B cell (primary cell): ENCODE measurements at regions of chr5 and their contacts with region 1.

Region 1: GRCh38 chr5:34522599-34523386 is 133.3 kb upstream of the RAI14 start:
- DNase-seq: peak; percentile 71
- ATAC-seq: peak; percentile 63
- H3K4me3 ChIP-seq: no peak overlapping the region
- H3K4me3 Mint-ChIP-seq: no peak overlapping the region
- H3K27ac ChIP-seq: no peak overlapping the region
- H3K27ac Mint-ChIP-seq: no peak overlapping the region
- H3K4me1 ChIP-seq: peaks cover 0 to 3% of the 10 kb centered on the region in 2 donors
- H3K4me1 Mint-ChIP-seq: no peaks in the 10 kb centered on the region
- H3K27me3 ChIP-seq: no peaks in the 10 kb centered on the region
- H3K27me3 Mint-ChIP-seq: peaks cover 5% of the 10 kb centered on the region
- CTCF ChIP-seq: peak; percentile 83

Region 2: GRCh38 chr5:34022121-34022705 is 500.6 kb before region 1 on chr5:
- CTCF ChIA-PET with region 1: no interaction called
- POLR2A ChIA-PET with region 1: no interaction called
- intact Hi-C with region 1: no loop called
- DNase-seq: no peak
- ATAC-seq: no peak
- H3K4me3 ChIP-seq: no peak overlapping the region
- H3K4me3 Mint-ChIP-seq: no peak overlapping the region
- H3K27ac ChIP-seq: no peak overlapping the region
- H3K27ac Mint-ChIP-seq: no peak overlapping the region
- H3K4me1 ChIP-seq: no peaks in the 10 kb centered on the region
- H3K4me1 Mint-ChIP-seq: no peaks in the 10 kb centered on the region
- H3K27me3 ChIP-seq: no peaks in the 10 kb centered on the region
- H3K27me3 Mint-ChIP-seq: no peaks in the 10 kb centered on the region
- CTCF ChIP-seq: no peak

Region 3: DNA sequence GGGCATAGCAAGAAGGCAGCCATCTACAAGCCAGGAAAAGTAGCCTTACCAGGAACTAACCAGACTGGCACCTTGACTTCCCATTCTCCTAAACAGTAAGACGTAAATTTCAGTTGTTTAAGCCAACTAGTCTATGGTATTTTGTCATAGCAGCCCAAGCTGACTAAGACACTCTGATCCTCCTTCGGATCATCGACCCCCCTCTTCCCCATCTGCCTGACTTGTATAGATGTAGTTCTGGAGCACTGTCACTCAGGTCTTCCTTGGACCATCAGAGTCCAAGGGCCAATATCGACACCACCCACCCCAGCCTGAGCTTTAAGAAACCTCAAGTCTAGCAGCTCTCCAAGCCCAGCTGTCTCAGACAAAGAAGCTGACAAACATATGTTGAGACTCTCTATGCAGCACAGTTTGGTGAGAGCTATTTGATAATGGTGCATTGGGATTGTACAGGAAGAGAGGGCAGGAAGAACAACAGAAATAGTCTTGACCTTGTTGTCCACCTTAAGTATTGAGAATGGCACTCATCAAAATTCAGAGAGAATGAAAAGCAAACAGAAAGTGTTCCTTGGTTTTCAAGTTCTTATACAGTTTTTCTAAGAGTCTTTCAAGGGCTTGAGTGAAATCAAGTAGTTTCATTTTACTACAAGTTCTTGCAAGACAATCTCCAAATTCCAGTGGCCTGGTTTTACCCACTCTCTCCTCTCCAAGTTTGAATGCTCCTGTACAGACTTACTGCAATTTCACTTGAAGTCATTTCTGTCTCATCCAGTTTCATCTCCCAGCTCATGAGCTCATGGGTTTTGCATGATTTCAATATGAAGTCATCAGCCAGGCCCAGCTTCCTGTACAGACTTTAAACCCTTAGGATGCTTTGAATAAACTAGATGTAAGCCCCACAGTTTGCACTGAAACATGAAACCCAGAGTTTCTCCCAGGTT is 11.1 kb after region 1 on chr5:
- CTCF ChIA-PET with region 1: interaction called, 15 read pairs
- POLR2A ChIA-PET with region 1: no interaction called
- intact Hi-C with region 1: no loop called
- DNase-seq: no peak
- ATAC-seq: no peak
- H3K4me3 ChIP-seq: no peak overlapping the region
- H3K4me3 Mint-ChIP-seq: no peak overlapping the region
- H3K27ac ChIP-seq: no peak overlapping the region
- H3K27ac Mint-ChIP-seq: no peak overlapping the region
- H3K4me1 ChIP-seq: no peaks in the 10 kb centered on the region
- H3K4me1 Mint-ChIP-seq: no peaks in the 10 kb centered on the region
- H3K27me3 ChIP-seq: peaks cover 0 to 4% (median 0%) of the 10 kb centered on the region in 4 experiments
- H3K27me3 Mint-ChIP-seq: no peaks in the 10 kb centered on the region
- CTCF ChIP-seq: no peak

Region 4: GRCh38 chr5:34898258-34898895 is 375.6 kb after region 1 on chr5:
- CTCF ChIA-PET with region 1: interaction called, 245 read pairs
- POLR2A ChIA-PET with region 1: no interaction called
- intact Hi-C with region 1: no loop called
- DNase-seq: peak; percentile 73
- ATAC-seq: peak; percentile 73
- H3K4me3 ChIP-seq: no peak overlapping the region
- H3K4me3 Mint-ChIP-seq: no peak overlapping the region
- H3K27ac ChIP-seq: no peak overlapping the region
- H3K27ac Mint-ChIP-seq: no peak overlapping the region
- H3K4me1 ChIP-seq: no peaks in the 10 kb centered on the region
- H3K4me1 Mint-ChIP-seq: no peaks in the 10 kb centered on the region
- H3K27me3 ChIP-seq: no peaks in the 10 kb centered on the region
- H3K27me3 Mint-ChIP-seq: no peaks in the 10 kb centered on the region
- CTCF ChIP-seq: peak; percentile 92

Region 5: DNA sequence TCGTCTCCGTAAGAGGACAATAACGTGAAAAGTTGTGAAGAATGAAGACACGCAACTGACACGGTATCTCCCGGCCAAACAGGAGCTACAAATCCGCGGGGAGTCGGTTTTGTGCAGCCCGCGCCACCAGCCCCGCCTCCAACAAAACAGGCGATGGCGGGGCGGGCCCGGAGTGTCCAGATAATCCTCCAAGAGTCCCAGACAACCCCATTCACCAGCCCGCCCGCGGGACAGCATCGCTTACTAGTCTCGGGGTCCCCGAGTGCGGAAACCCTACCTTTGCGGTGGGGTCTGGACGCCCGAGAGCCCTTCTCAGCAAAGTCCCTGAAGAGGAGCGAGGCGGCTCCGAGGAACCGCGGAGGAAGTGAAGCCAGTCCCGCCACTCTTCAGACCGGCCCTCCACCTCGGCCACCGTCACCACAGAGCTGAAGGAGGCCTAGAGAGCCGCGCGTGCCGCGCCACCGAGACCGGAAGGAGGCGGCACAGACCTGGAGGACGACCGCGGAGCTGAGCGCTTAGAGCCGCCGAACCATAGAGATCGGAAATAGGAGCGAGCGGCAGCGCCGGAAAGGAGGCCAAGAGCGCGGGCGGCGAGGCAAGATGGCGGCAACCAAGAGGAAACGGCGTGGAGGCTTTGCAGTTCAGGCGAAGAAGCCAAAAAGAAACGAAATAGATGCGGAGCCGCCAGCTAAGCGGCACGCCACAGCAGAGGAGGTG is 392.5 kb after region 1 on chr5 and contains the starts of genes BRIX1 and RAD1:
- CTCF ChIA-PET with region 1: interaction called, 11 read pairs
- POLR2A ChIA-PET with region 1: no interaction called
- intact Hi-C with region 1: no loop called
- DNase-seq: peak; percentile 97
- ATAC-seq: peak; percentile 99
- H3K4me3 ChIP-seq: peak within 1 kb of the TSS; percentile 82 to 99 (median 87)
- H3K4me3 Mint-ChIP-seq: no peak within 1 kb of the TSS
- H3K27ac ChIP-seq: peak within 1 kb of the TSS; percentile 57 to 80
- H3K27ac Mint-ChIP-seq: peak within 1 kb of the TSS; percentile 63
- H3K4me1 ChIP-seq: peaks cover 23 to 26% of the 10 kb centered on the region in 2 donors
- H3K4me1 Mint-ChIP-seq: peaks cover 32% of the 10 kb centered on the region
- H3K27me3 ChIP-seq: no peaks in the 10 kb centered on the region
- H3K27me3 Mint-ChIP-seq: no peaks in the 10 kb centered on the region
- CTCF ChIP-seq: no peak
- total RNA-seq, gene BRIX1: 26.4 and 29.3 TPM in 2 replicates
- total RNA-seq, gene RAD1: 25.9 and 26.1 TPM in 2 replicates

Region 6: GRCh38 chr5:35003018-35003957 is 480.5 kb after region 1 on chr5:
- CTCF ChIA-PET with region 1: interaction called, 22 read pairs
- POLR2A ChIA-PET with region 1: no interaction called
- intact Hi-C with region 1: no loop called
- DNase-seq: peak; percentile 54
- ATAC-seq: peak; percentile 28
- H3K4me3 ChIP-seq: no peak overlapping the region
- H3K4me3 Mint-ChIP-seq: no peak overlapping the region
- H3K27ac ChIP-seq: no peak overlapping the region
- H3K27ac Mint-ChIP-seq: no peak overlapping the region
- H3K4me1 ChIP-seq: no peaks in the 10 kb centered on the region
- H3K4me1 Mint-ChIP-seq: no peaks in the 10 kb centered on the region
- H3K27me3 ChIP-seq: peaks cover 0 to 11% (median 5%) of the 10 kb centered on the region in 4 experiments
- H3K27me3 Mint-ChIP-seq: peaks cover 35% of the 10 kb centered on the region
- CTCF ChIP-seq: peak; percentile 84